ENCODE measurements at regions of chr5 and their contacts with region 1.

Region 1: DNA sequence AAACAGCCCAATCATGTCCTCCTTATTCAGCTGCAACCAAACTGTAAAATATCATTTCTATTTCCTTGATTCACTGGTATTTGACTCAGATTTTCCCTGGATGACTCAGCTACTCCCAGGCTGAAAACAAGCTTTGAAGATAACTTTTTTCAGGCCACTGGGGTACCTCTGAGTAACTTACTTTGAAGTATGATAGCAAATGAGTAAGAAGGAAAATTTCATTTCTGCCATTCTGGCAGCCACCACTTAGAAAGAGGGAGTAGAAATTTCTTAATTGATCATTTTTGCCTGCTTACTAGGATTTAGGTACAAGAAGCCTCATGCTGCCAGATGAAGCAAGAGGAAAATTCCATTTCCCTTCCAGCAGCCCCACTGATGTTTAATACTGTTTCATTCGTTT is 247.4 kb downstream of the PRELID2 start:
- DNase-seq: peak; percentile 94
- ATAC-seq: peak; percentile 85
- H3K4me3 ChIP-seq: peak overlapping the region in 1 of 2 experiments; percentile 31; a peak in 2 of 4 replicates
- H3K27ac ChIP-seq: peak overlapping the region; percentile 82
- H3K4me1 ChIP-seq: peaks cover 24 to 38% of the 10 kb centered on the region in 2 experiments
- H3K27me3 ChIP-seq: no peaks in the 10 kb centered on the region
- CTCF ChIP-seq: no peak
- POLR2A ChIP-seq: no peak
- RAD21 ChIP-seq: peak; percentile 48

Region 2: GRCh38 chr5:145484158-145484557 is 103.6 kb before region 1 on chr5:
- CTCF ChIA-PET with region 1: no interaction called
- POLR2A ChIA-PET with region 1: no interaction called
- RAD21 ChIA-PET with region 1: no interaction called
- intact Hi-C with region 1: loop called (anchors 5 kb)
- DNase-seq: peak; percentile 78
- ATAC-seq: peak; percentile 80
- H3K4me3 ChIP-seq: no peak overlapping the region
- H3K27ac ChIP-seq: no peak overlapping the region
- H3K4me1 ChIP-seq: peaks cover 6 to 33% of the 10 kb centered on the region in 2 experiments
- H3K27me3 ChIP-seq: no peaks in the 10 kb centered on the region
- CTCF ChIP-seq: no peak
- POLR2A ChIP-seq: no peak
- RAD21 ChIP-seq: peak; percentile 18; the same call in 1 of the 2 replicates

Measured in HCT116 (cell line).